ENCODE measurements at regions of chr3 and their contacts with region 1.

Region 1: GRCh38 chr3:181709537-181710279 is 2.0 kb upstream of the SOX2 start:
- DNase-seq: peak in 1 of 2 experiments; percentile 94
- H3K4me3 ChIP-seq: peak overlapping the region; percentile 81 to 98 (median 88); a peak in 7 of 8 replicates
- H3K27ac ChIP-seq: peak overlapping the region; percentile 58
- H3K4me1 ChIP-seq: peaks cover 0 to 31% (median 13%) of the 10 kb centered on the region in 4 experiments; a peak in 6 of 7 replicates
- H3K27me3 ChIP-seq: peaks cover 0 to 2% (median 1%) of the 10 kb centered on the region in 4 experiments; a peak in 3 of 7 replicates
- CTCF ChIP-seq: peak; percentile 57 to 66 (median 62)
- EP300 ChIP-seq: no peak
- POLR2A ChIP-seq: no peak
- RAD21 ChIP-seq: peak; percentile 87

Region 2: GRCh38 chr3:181683563-181683962 is 26.1 kb before region 1 on chr3:
- CTCF ChIA-PET with region 1: no interaction called
- POLR2A ChIA-PET with region 1: no interaction called
- DNase-seq: no peak
- H3K4me3 ChIP-seq: no peak overlapping the region
- H3K27ac ChIP-seq: no peak overlapping the region
- H3K4me1 ChIP-seq: peaks cover 0 to 8% (median 6%) of the 10 kb centered on the region in 4 experiments; a peak in 2 of 7 replicates
- H3K27me3 ChIP-seq: no peaks in the 10 kb centered on the region
- CTCF ChIP-seq: no peak
- EP300 ChIP-seq: no peak
- POLR2A ChIP-seq: no peak
- RAD21 ChIP-seq: no peak

Region 3: DNA sequence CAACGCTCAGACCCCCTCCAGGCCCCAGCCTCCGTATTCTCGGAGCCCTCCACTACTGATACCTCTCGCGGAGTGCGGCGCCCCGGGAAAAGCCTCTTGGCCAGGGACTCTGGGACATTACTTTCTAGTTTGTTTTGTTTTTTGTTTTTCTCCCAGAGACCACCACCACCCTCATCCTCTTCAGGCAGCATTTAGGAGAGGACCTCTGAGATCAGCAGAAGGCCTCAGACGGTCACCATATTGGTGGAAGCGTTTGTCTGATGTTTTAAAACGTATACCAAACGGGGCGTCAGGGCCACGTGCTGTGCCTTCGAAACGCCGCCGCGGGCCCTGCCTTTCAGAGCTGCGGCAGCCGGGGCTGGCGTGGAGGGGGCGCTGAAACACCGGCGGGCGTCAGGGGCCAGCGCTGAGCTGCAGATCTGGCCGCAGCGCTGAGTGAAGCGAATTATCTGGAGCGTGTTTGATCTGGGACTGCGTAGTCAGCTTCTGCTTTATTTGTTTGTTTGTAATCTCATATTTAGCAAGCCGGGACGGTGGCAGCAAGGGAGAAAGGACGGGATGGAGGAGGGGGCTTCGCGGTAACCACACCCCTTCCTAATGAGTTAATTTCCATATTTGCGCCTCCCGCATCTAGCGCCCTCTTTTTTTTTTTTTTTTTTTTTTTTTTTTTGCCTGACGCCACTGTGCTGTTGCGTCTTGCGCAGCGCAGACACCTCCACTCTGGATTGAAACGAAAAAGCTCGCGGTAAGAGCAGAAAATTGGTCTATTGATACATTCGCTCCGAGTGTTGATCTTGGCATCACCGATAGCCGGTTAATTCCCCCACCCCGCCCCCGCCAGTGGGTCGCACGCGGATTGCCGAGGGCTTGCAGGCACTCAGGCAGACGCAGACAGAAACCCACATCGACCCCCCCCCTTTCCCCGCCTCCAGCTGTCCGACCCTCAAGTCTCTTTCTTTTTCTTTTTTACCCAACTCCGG is 16.9 kb after region 1 on chr3:
- CTCF ChIA-PET with region 1: interaction called, 15 read pairs
- POLR2A ChIA-PET with region 1: interaction called, 72 read pairs
- DNase-seq: peak in 1 of 2 experiments; percentile 84
- H3K4me3 ChIP-seq: peak overlapping the region; percentile 40 to 73 (median 53)
- H3K27ac ChIP-seq: no peak overlapping the region
- H3K4me1 ChIP-seq: peaks cover 17 to 51% (median 35%) of the 10 kb centered on the region in 4 experiments
- H3K27me3 ChIP-seq: peaks cover 6 to 31% (median 20%) of the 10 kb centered on the region in 4 experiments
- CTCF ChIP-seq: peak; percentile 54 to 65 (median 63)
- EP300 ChIP-seq: no peak
- POLR2A ChIP-seq: no peak
- RAD21 ChIP-seq: peak; percentile 70 to 84

Measured in H1 (cell line).